Psoas muscle (tissue), 8 donors: ENCODE measurements at regions of chr4 and their contacts with region 1.

Region 1: GRCh38 chr4:176195184-176195978 is at the start of gene SPATA4:
- DNase-seq: peak; percentile 94 to 98
- ATAC-seq: peak; percentile 95 to 98 (median 96)
- H3K4me3 ChIP-seq: peak within 1 kb of the TSS; percentile 76
- H3K27ac ChIP-seq: peak within 1 kb of the TSS; percentile 90
- H3K4me1 ChIP-seq: peaks cover 21% of the 10 kb centered on the region
- H3K27me3 ChIP-seq: no peaks in the 10 kb centered on the region
- CTCF ChIP-seq: no peak
- total RNA-seq, gene SPATA4: 0.38 to 1.7 (median 0.74) TPM

Region 2: GRCh38 chr4:175739612-175740011 is 455.8 kb before region 1 on chr4:
- intact Hi-C with region 1: no loop called
- DNase-seq: no peak
- ATAC-seq: no peak
- H3K4me3 ChIP-seq: no peak overlapping the region
- H3K27ac ChIP-seq: no peak overlapping the region
- H3K4me1 ChIP-seq: no peaks in the 10 kb centered on the region
- H3K27me3 ChIP-seq: no peaks in the 10 kb centered on the region
- CTCF ChIP-seq: no peak

Region 3: DNA sequence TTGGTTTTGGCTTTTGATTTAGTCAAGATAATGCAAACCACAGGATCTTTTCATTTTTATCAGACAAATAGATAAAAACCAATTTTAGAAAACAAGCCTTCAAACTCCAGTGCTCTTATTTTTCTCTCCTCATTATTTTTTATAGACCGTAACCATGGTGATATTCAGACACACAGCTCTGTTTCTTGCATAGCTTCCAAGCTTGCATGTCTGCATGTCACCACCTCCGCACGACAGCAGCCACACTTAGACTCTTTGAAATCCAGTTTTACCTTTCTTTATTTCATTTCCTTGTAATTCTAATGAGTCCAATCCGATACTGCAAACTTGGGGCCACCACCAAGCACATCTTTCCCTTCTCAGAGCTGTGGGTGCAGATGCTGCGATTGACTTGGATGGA is 289.0 kb before region 1 on chr4:
- intact Hi-C with region 1: no loop called
- DNase-seq: no peak
- ATAC-seq: no peak
- H3K4me3 ChIP-seq: no peak overlapping the region
- H3K27ac ChIP-seq: no peak overlapping the region
- H3K4me1 ChIP-seq: no peaks in the 10 kb centered on the region
- H3K27me3 ChIP-seq: no peaks in the 10 kb centered on the region
- CTCF ChIP-seq: no peak

Region 4: DNA sequence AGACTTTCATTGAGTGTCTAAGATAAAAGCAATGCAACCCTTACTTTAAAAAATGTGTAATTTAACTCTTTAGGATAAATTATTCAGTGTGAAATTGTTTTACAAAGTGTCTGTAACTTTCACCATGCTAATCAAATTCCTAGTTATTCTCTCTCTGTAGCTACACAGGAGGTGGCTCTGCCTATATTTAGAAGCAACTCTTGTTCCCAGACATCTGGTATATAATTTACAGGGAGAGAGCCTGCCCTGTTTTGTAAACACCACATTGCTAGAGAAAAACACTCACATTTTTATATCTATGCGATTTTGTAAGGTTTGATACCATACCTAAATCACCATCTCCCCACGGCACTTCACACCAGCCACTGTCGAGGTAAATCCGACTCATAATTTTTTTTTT is 35.5 kb after region 1 on chr4:
- intact Hi-C with region 1: loop called in 1 of 2 experiments (anchors 5 kb)
- DNase-seq: no peak
- ATAC-seq: peak in 3 of 4 donors; percentile 57 to 66 (median 62)
- H3K4me3 ChIP-seq: peak overlapping the region; percentile 48
- H3K27ac ChIP-seq: peak overlapping the region; percentile 95
- H3K4me1 ChIP-seq: peaks cover 81% of the 10 kb centered on the region
- H3K27me3 ChIP-seq: no peaks in the 10 kb centered on the region
- CTCF ChIP-seq: no peak

Region 5: DNA sequence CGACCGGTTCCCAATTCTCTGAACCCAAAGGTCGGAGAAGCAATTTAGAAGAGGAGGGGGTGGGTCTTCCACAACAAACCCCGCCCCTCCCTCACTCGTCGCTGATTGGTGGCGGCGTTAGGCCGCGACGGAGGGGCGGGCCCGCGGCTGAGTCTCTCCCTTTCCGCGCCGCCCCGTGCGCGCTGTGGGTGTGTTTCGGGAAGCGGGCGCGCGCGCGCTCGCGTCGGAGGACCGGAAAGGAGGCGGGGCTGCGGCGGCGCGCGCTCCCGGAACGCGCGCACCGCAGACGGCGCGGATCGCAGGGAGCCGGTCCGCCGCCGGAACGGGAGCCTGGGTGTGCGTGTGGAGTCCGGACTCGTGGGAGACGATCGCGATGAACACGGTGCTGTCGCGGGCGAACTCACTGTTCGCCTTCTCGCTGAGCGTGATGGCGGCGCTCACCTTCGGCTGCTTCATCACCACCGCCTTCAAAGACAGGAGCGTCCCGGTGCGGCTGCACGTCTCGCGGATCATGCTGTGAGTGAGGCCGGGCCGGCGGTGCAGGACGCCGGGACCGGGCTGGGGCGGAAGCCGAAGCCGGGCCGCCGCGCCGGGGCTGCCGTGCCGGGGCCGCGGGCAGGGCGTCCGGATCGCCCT is 124.4 kb after region 1 on chr4 and contains the start of gene SPCS3:
- intact Hi-C with region 1: loop called in 1 of 2 experiments (anchors 5 kb)
- DNase-seq: peak; percentile 97
- ATAC-seq: peak; percentile 97 to 99 (median 98)
- H3K4me3 ChIP-seq: peak within 1 kb of the TSS; percentile 83
- H3K27ac ChIP-seq: peak within 1 kb of the TSS; percentile 98
- H3K4me1 ChIP-seq: peaks cover 35% of the 10 kb centered on the region
- H3K27me3 ChIP-seq: no peaks in the 10 kb centered on the region
- CTCF ChIP-seq: no peak
- total RNA-seq, gene SPCS3: 32.8 to 75.8 (median 52.3) TPM

Region 6: DNA sequence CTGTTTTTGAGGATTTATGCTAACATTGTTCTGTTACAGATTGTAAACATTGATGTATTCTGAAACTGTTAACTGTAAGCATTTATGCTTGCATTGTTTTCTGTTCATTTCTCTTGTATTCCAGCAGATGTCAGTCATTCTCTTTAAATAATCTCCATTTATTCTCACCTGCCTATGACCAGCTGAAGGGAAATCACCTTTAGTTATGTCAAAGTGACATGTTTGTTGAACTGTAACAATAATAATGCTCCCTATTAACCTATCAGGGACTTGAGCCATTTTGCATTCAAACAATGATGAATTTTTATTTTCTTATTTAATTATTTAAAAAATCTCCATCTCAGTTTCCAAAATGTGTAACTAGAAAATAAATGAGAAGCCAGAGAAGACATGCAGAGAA is 182.4 kb after region 1 on chr4:
- intact Hi-C with region 1: no loop called
- DNase-seq: no peak
- ATAC-seq: no peak
- H3K4me3 ChIP-seq: no peak overlapping the region
- H3K27ac ChIP-seq: no peak overlapping the region
- H3K4me1 ChIP-seq: no peaks in the 10 kb centered on the region
- H3K27me3 ChIP-seq: no peaks in the 10 kb centered on the region
- CTCF ChIP-seq: peak; percentile 45